Kidney (tissue), 22 donors: ENCODE measurements at regions of chr16 and their contacts with region 1.

Region 1: DNA sequence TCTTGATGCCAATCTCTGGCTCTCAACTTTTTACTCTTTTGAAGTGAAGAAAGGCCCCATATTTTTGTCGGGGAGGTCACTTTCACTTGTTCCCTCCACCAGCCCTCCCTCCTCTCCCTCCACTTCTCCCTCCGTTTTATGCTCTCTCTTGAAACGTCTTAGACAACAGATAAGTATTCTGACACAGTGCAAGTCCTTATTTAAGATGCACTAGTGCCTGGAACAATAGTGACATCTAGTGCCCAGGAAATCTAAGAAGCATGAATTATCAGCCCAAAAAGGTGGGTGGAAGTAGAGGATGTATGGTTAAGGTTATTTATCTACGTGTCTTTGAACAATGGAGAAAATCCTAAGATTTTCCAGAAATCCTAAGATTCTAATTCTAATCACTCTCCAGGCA is 17.9 kb downstream of the PSME3IP1 start:
- DNase-seq: peak in 2 of 5 donors; percentile 78 to 87
- H3K4me3 ChIP-seq: no peak overlapping the region
- H3K27ac ChIP-seq: no peak overlapping the region
- H3K4me1 ChIP-seq: peaks cover 5 to 7% (median 5%) of the 10 kb centered on the region in 3 donors
- H3K27me3 ChIP-seq: no peaks in the 10 kb centered on the region
- CTCF ChIP-seq: peak; percentile 63

Region 2: DNA sequence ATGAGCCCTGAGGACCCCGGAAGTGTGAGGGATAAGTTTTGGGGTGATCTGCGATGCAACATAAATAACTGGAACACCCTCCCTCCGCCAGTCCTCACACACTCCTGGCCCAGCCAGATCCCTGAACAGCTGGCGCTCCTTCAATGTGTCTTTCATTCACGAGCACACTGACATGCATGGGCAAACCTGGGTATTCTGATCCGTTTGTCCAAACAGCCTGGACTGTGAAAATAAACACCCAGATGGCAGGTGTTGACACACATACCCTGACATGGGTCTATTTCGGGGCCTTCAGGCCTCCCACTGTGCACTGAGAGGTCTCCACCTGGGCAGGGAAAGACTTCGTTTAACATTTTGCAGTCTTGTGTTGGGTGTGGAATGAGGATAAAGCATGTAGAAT is 78.5 kb before region 1 on chr16:
- intact Hi-C with region 1: loop called (anchors 5 kb)
- DNase-seq: peak in 3 of 5 donors; percentile 47 to 72 (median 64)
- H3K4me3 ChIP-seq: no peak overlapping the region
- H3K27ac ChIP-seq: no peak overlapping the region
- H3K4me1 ChIP-seq: peaks cover 0 to 10% (median 6%) of the 10 kb centered on the region in 3 donors
- H3K27me3 ChIP-seq: no peaks in the 10 kb centered on the region
- CTCF ChIP-seq: no peak